Activated CD4-positive, alpha-beta T cell treated with anti-CD3 and anti-CD28 coated beads for 36 hours (primary cell): ENCODE measurements at regions of chr1 and their contacts with region 1.

Region 1: DNA sequence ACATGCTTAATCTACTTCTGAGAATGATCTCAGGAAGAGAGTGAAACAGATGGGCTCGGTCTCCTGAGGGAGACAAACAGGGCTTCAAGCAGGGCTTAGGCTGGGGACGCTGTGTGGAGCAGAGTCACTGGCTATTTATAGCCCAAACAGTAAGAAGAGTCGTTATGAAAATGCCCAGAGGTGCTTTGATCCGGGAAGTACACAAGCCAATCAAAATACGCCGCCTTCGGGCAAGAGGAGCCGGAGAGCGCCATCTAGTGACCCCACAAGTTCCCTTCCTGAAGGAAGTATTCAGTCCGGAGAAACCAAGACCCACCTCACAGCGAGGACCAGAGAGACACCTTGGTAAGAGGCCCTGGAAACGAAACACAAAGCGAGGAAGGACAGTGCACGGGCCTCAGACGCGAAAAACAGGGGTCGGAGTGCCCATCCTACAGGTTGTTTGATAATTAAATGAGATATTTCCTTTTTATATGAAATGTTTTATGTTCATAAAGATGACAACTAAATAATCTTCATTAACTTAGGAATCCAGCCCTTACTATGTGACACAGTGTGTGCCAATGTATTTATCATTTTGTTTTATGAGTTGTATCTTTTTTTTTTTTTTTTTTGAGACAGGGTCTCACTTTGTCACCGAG is 25.0 kb upstream of the SCCPDH start:
- DNase-seq: peak; percentile 92
- ATAC-seq: peak; percentile 99
- H3K4me3 Mint-ChIP-seq: peak overlapping the region; percentile 1
- H3K27ac Mint-ChIP-seq: peak overlapping the region; percentile 48
- H3K4me1 Mint-ChIP-seq: peaks cover 5% of the 10 kb centered on the region
- H3K27me3 Mint-ChIP-seq: no peaks in the 10 kb centered on the region

Region 2: DNA sequence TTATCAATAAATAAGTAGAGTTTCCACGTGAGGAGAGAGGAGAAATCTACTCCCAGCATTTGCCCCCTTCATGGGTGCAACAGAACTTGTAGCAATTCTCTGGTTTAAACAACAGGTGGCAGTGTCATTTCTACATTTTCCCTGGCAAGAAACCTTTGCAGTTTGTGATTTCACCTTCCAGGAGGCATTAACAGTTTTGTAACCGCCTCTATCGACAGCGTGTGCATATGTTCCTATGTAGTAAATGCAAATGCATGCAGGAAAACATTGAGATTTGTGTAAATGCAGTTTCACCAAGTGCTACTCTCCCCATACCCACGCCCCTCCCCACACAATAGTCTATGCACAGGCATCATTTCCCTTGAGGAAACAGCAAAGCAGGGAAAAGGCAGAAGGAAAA is 686.9 kb before region 1 on chr1:
- CTCF ChIA-PET with region 1: no interaction called
- POLR2A ChIA-PET with region 1: no interaction called
- intact Hi-C with region 1: loop called in 1 of 2 experiments (anchors 5 kb)
- DNase-seq: peak; percentile 6
- ATAC-seq: no peak
- H3K4me3 Mint-ChIP-seq: no peak overlapping the region
- H3K27ac Mint-ChIP-seq: no peak overlapping the region
- H3K4me1 Mint-ChIP-seq: no peaks in the 10 kb centered on the region
- H3K27me3 Mint-ChIP-seq: no peaks in the 10 kb centered on the region

Region 3: DNA sequence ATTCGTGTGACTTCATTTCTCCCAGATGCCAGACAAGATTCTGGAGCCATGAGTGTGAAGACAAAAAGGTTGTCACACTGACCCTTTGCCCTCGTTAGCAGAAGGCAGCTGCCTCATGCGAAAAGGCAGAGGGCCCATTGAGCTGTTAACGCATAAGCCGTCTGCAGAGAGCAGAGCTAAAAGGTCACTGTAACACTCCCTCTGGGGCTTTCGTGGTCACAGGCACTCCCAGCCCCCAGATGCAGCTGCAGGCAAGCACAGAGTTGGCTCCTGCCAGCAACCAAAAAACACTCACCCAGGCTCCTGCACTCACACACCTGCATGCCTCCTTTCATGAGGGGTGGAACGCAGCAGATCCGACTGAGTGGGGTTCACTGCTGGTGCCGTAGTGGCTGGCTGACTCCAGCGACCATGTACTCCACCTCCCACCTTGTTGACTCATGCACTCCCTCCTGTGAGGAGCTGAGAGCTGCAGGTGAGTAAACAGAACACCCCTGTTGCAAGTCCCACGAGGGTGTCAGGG is 479.6 kb before region 1 on chr1:
- CTCF ChIA-PET with region 1: no interaction called
- POLR2A ChIA-PET with region 1: no interaction called
- intact Hi-C with region 1: no loop called
- DNase-seq: no peak
- ATAC-seq: no peak
- H3K4me3 Mint-ChIP-seq: no peak overlapping the region
- H3K27ac Mint-ChIP-seq: no peak overlapping the region
- H3K4me1 Mint-ChIP-seq: no peaks in the 10 kb centered on the region
- H3K27me3 Mint-ChIP-seq: no peaks in the 10 kb centered on the region

Region 4: DNA sequence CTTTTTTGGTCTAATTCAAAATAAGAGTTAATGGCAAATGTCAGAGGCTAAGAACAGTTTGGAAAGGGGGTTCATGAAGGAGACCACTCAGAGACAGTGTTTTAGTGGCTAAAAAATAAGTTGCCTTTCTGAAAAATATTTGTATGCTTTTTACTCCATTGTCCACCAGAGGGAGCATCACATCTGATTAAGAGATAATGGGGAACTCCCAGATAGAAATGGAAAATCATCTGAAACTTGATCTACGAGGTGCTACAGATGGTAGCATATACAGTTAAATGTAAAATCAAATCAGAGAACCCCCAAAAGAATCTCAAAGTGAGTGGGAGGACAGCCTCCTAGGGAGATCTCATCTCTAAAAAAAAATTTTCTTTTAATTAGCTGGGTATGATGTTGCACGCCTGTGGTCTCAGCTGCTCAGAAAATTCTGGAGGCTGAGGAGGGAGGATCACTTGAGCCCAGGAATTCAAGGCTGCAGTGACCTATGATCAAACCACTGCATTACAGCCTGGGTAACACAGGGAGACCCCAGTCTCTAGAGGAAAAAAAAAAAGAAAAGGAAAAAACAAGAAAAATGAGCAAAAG is 201.8 kb before region 1 on chr1:
- CTCF ChIA-PET with region 1: interaction called, 4 read pairs
- POLR2A ChIA-PET with region 1: no interaction called
- intact Hi-C with region 1: loop called (anchors 1 kb)
- DNase-seq: no peak
- ATAC-seq: peak; percentile 78
- H3K4me3 Mint-ChIP-seq: no peak overlapping the region
- H3K27ac Mint-ChIP-seq: no peak overlapping the region
- H3K4me1 Mint-ChIP-seq: peaks cover 10% of the 10 kb centered on the region
- H3K27me3 Mint-ChIP-seq: no peaks in the 10 kb centered on the region

Region 5: DNA sequence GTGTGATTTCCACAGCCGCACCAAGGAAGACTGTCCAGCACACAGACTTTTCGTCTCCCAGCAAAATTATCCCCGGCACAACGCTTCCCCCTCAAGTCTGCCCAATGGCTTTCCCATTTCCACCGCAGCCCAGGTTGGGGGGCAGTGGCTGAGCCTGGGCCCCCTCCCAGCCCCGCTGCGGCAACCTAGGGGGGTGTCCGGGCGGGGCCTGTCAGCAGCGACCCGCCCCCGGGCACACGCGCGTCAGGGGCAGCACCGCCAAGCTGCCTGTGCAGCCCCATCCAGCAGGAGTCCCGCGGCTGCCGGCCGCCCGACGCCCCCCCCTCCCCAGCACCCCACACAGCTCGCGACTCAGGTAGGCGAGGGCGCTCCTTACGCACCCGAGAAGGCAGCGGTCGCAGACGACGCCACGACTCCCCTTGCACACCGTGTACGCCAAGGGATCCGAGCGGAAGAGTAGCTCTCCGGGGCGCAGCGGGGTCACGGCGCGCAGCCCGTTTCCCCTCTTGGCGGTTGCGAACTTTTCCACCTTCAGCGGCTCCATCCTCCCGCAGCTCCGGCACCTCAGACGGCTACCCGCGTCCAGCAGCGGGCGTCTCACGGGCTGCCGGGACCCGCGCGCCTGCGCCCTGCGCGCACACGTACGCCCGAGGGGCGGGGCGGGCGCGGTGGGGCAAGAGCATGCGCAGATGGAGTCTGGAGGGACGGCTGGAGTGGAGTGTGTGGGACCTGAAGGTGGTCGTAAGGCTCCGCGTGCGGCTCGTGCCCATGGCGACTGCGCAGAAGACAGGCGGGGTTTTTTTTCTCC is 192.3 kb before region 1 on chr1 and contains the start of gene SMYD3:
- CTCF ChIA-PET with region 1: no interaction called
- POLR2A ChIA-PET with region 1: no interaction called
- intact Hi-C with region 1: loop called in 1 of 2 experiments (anchors 2 kb)
- DNase-seq: peak; percentile 84
- ATAC-seq: peak; percentile 93
- H3K4me3 Mint-ChIP-seq: peak within 1 kb of the TSS; percentile 78
- H3K27ac Mint-ChIP-seq: peak within 1 kb of the TSS; percentile 89
- H3K4me1 Mint-ChIP-seq: peaks cover 26% of the 10 kb centered on the region
- H3K27me3 Mint-ChIP-seq: no peaks in the 10 kb centered on the region
- total RNA-seq, gene SMYD3: 17.2 to 18.4 TPM

Region 6: GRCh38 chr1:246711548-246712042 is 12.4 kb after region 1 on chr1:
- CTCF ChIA-PET with region 1: interaction called, 12 read pairs
- POLR2A ChIA-PET with region 1: no interaction called
- intact Hi-C with region 1: no loop called
- DNase-seq: no peak
- ATAC-seq: no peak
- H3K4me3 Mint-ChIP-seq: no peak overlapping the region
- H3K27ac Mint-ChIP-seq: no peak overlapping the region
- H3K4me1 Mint-ChIP-seq: peaks cover 5% of the 10 kb centered on the region
- H3K27me3 Mint-ChIP-seq: peaks cover 18% of the 10 kb centered on the region

Region 7: GRCh38 chr1:246724016-246724730 is 25.0 kb after region 1 on chr1 and contains the start of gene SCCPDH:
- CTCF ChIA-PET with region 1: no interaction called
- POLR2A ChIA-PET with region 1: no interaction called
- intact Hi-C with region 1: loop called in 1 of 2 experiments (anchors 1 kb)
- DNase-seq: peak; percentile 84
- ATAC-seq: peak; percentile 96
- H3K4me3 Mint-ChIP-seq: peak within 1 kb of the TSS; percentile 83
- H3K27ac Mint-ChIP-seq: peak within 1 kb of the TSS; percentile 84
- H3K4me1 Mint-ChIP-seq: peaks cover 8% of the 10 kb centered on the region
- H3K27me3 Mint-ChIP-seq: no peaks in the 10 kb centered on the region
- total RNA-seq, gene SCCPDH: 17.1 to 28.6 TPM

Region 8: DNA sequence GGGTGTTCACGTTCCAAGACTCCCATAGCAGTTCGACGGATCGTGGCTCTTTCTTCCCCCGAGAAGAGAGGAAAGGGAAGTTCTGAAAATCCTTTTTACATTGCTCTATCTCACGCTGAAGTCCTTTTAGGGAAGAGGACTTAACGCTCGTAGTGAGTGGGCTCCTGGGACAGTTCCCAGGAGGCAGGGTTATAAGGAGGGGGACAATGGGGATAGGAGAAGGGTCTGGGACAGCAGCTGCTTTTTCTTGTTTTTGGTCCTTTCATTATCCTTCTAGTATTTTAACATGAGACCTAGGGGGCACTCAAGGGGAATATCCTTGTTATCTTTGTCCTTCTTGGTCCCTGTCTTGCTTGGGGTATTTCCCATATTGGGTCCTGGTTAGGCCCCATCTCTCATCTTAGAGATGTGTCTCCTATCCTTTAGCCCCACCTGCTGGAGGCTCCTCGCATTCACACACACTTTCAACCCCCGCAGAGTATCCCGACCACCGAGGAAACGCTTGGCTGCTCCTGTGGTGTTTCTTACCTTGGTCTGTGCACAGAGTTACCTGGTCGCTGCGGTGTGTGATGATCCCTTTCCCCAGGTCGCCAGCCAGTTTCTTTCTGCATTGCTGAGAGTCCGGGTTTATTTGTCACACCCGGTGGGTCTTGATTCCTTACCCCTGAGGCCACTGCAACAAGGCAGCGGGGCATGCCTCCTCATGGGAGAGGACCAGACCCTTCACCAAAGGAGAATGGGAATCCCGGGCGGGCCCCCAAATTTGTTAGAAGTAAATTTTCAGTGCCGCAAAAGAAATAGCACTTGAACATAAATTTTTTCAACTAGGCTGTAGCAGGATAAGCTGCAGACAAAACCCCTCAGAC is 54.7 kb after region 1 on chr1:
- CTCF ChIA-PET with region 1: no interaction called
- POLR2A ChIA-PET with region 1: no interaction called
- intact Hi-C with region 1: loop called (anchors 2 to 5 kb)
- DNase-seq: peak; percentile 78
- ATAC-seq: peak; percentile 91
- H3K4me3 Mint-ChIP-seq: no peak overlapping the region
- H3K27ac Mint-ChIP-seq: no peak overlapping the region
- H3K4me1 Mint-ChIP-seq: no peaks in the 10 kb centered on the region
- H3K27me3 Mint-ChIP-seq: no peaks in the 10 kb centered on the region